ENCODE measurements at regions of chr9 and their contacts with region 1.

Region 1: GRCh38 chr9:108412755-108413154 is 443.0 kb downstream of the ACTL7B start:
- DNase-seq: peak; percentile 19
- H3K4me3 Mint-ChIP-seq: no peak overlapping the region
- H3K27ac Mint-ChIP-seq: no peak overlapping the region
- H3K4me1 Mint-ChIP-seq: peaks cover 11% of the 10 kb centered on the region
- H3K27me3 Mint-ChIP-seq: no peaks in the 10 kb centered on the region
- CTCF ChIP-seq: no peak

Region 2: DNA sequence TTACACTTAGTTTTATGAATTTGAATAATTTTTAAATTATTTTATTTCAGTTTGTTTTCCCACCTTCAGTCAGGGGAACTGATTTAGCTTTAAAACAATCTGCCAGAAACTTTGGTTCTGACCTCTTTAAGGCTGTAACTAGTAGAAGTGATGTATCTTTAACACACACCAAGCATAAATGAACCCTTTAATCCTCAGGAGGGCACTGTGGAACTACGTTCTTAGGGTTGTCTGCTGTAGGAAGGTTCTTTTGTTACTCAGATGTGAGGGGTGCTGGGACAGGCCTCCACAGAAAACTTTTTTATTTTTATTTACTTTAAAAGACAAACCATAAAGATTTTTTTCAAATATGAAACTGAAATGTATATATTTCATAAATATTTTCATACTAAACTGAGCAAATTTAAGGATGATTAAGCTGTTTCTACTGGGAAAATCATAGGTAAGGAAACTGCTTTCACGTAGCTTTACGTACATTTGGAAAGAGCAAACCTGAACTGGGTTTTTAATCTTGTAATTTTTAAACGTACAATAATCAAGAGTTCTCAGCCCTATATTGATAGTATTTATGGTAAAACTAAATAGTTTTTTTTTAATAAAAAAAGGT is 928.5 kb before region 1 on chr9:
- CTCF ChIA-PET with region 1: interaction called, 5 read pairs
- POLR2A ChIA-PET with region 1: interaction called, 3 read pairs
- intact Hi-C with region 1: loop called (anchors 2 kb)
- DNase-seq: peak; percentile 81
- H3K4me3 Mint-ChIP-seq: no peak overlapping the region
- H3K27ac Mint-ChIP-seq: no peak overlapping the region
- H3K4me1 Mint-ChIP-seq: peaks cover 31% of the 10 kb centered on the region
- H3K27me3 Mint-ChIP-seq: no peaks in the 10 kb centered on the region
- CTCF ChIP-seq: peak; percentile 55

Region 3: GRCh38 chr9:107975426-107976010 is 437.2 kb before region 1 on chr9:
- CTCF ChIA-PET with region 1: no interaction called
- POLR2A ChIA-PET with region 1: no interaction called
- intact Hi-C with region 1: no loop called
- DNase-seq: no peak
- H3K4me3 Mint-ChIP-seq: no peak overlapping the region
- H3K27ac Mint-ChIP-seq: no peak overlapping the region
- H3K4me1 Mint-ChIP-seq: peaks cover 15% of the 10 kb centered on the region
- H3K27me3 Mint-ChIP-seq: no peaks in the 10 kb centered on the region
- CTCF ChIP-seq: no peak

Region 4: DNA sequence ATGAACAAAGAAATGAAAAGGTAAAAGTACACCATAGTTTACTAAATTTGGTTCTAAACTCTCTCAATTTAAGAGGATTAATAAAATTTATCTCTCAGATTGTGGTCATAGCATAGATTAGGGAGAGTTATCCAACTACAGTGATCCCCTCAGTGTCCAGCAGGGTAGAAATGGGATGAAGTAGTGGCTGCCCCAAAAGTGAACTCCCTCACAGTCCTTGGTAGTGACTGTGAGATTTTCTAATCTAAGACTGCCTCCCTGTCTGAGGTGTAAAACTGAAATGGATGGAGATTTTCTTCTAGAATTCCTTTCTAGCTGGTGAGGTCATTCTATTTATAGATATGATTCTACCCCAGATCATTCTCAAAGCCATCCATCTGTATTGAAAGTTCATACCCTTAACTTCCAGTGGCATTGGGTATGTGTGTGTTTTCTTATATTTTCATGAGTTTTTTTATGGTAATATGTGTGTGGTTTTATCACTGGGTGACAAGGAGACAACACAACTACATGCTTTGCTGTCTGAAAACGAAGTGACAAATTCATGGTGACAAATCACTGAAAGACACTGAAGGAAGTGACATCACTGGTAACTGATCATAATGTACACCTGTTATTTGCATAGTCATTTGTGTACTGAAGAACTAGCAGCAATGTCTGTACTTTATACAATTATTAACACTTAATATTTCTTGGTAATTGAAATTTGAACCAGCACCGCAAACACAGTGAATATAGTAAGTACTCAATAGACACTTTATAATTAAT is 12.3 kb before region 1 on chr9:
- CTCF ChIA-PET with region 1: interaction called, 11 read pairs
- POLR2A ChIA-PET with region 1: interaction called, 6 read pairs
- intact Hi-C with region 1: no loop called
- DNase-seq: no peak
- H3K4me3 Mint-ChIP-seq: no peak overlapping the region
- H3K27ac Mint-ChIP-seq: no peak overlapping the region
- H3K4me1 Mint-ChIP-seq: no peaks in the 10 kb centered on the region
- H3K27me3 Mint-ChIP-seq: no peaks in the 10 kb centered on the region
- CTCF ChIP-seq: no peak

Measured in MCF 10A (cell line).